AG04449 (cell line): ENCODE measurements at regions of chr14 and their contacts with region 1.

Region 1: GRCh38 chr14:103104654-103105452 is 10.3 kb downstream of the EXOC3L4 start:
- DNase-seq: no peak
- H3K4me3 ChIP-seq: no peak overlapping the region
- CTCF ChIP-seq: peak; percentile 97

Region 2: DNA sequence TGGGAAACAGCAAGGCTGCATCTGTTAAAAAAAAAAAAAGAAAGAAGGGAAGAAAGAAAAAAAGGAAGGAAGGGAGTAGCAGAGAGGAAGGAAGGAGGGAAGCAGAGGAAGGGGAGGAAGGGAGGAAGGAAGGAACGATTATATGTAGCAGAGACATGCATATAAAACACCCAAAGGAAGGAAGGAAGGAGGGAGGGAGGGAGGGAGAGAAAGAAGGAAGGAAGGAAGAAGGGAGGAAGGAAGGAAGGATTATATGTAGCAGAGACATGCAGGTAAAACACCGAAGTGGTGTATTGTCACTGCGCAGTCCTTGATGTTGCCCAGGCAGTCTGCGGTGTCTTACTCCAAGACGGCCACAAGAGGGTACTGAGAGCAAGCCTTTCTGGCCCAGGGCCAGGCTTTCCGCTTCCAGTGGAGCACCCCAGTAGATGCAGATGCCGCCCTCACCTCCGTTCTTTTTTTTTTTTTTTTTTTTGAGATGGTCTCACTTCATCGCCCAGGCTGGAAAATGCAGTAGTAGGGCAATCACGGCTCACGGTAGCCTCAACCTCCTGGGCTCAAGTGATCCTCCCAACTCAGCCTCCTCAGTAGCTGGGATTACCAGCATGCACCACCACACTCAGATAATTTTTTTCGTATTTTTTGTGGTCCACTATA is 26.6 kb before region 1 on chr14:
- CTCF ChIA-PET with region 1: interaction called, 34 read pairs
- POLR2A ChIA-PET with region 1: no interaction called
- DNase-seq: no peak
- H3K4me3 ChIP-seq: no peak overlapping the region
- CTCF ChIP-seq: peak; percentile 84

Region 3: DNA sequence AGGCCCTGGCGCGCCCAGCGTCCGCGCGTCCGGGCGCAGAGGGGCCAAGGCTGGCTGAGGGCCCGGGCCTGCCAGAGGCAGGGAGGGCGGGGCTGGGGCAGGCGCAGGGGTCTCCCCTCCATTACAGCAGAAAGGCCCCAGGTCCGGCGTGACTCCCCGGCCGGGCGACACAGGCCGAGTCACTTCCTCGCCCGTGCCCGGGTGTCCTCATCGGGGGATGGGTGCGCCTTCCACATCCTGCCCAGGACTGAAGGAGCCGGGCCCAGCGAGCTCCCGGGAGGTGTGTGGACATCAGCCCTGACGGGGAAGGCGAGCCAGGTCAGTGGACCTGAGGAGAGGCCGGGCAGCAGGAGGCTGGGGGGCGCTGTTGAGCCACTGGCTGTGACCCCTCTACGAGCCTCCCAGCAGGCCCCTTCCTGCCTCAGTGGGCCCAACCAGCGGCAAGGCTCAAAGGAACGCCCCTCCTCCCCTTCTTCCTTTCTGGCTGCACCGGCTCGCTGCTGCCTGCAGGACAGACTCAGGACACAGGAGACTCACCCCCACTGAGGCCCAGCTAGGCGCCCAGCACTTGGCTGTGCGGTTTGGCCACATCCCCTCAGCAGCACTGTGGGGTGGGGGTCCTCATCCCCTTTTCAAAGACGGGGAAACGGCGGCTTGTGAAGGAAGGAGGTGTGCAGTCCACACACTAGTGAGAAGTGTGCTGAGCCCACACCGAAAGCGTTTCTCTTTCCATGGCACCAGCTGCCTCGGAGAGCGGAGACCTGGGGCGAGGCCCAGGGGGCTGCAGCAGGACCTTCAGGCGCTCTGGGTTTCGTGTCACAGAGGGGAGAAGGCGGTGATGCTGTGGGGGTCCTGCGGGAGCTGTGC is 19.0 kb after region 1 on chr14:
- CTCF ChIA-PET with region 1: interaction called, 79 read pairs
- POLR2A ChIA-PET with region 1: no interaction called
- DNase-seq: no peak
- H3K4me3 ChIP-seq: peak overlapping the region; percentile 39
- CTCF ChIP-seq: peak; percentile 30

Region 4: DNA sequence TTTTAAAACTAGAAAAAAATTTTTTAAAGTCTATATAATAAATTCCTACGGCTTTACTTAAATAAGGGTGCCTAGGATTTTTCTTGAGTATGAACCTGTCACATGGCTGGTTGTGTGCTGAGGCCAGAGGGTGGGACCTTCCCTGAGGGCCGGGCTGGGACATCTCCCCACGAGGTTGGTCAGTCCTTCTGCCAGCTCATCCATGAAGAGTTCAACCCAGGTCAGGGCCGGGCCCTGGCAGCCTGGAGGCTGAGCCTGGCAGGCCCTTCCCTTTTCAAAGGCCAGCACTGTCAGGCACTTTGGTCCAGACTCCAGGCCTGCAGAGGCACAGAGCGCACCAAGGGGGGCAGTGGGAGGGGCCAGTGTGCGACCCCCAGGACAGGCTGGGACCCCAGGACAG is 50.2 kb after region 1 on chr14:
- CTCF ChIA-PET with region 1: interaction called, 15 read pairs
- POLR2A ChIA-PET with region 1: no interaction called
- DNase-seq: no peak
- H3K4me3 ChIP-seq: no peak overlapping the region
- CTCF ChIP-seq: no peak

Region 5: GRCh38 chr14:103250888-103251505 is 146.1 kb after region 1 on chr14:
- CTCF ChIA-PET with region 1: interaction called, 11 read pairs
- POLR2A ChIA-PET with region 1: no interaction called
- DNase-seq: no peak
- H3K4me3 ChIP-seq: no peak overlapping the region
- CTCF ChIP-seq: no peak

Region 6: DNA sequence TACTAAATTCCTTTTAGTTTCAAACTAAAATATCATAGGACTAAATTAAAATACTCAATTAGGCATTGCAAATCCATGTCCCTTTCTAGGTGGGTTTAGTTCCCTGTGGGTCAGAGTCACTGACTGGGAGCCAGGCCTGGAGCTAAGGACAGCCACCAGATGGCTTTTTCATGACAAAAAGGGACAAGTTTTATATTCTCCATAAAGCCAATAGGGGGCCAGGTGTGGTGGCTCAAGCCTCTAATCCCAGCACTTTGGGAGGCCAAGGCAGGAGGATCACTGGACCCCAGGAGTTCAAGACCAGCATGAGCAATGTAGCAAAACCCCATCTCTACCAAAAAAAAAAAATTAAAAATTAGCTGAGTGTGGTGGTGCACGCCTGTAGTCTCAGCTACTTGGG is 193.8 kb after region 1 on chr14:
- CTCF ChIA-PET with region 1: interaction called, 171 read pairs
- POLR2A ChIA-PET with region 1: no interaction called
- DNase-seq: no peak
- H3K4me3 ChIP-seq: no peak overlapping the region
- CTCF ChIP-seq: no peak